Activated CD4-positive, alpha-beta memory T cell treated with anti-CD3 and anti-CD28 coated beads, Interleukin-2, amount 10 ng/mL, durations not matched to agents 7 days and 5 days (primary cell): ENCODE measurements at regions of chr4 and their contacts with region 1.

Region 1: GRCh38 chr4:40205259-40206198 is 8.7 kb downstream of the RHOH start:
- DNase-seq: peak; percentile 66
- H3K4me3 Mint-ChIP-seq: peak overlapping the region; percentile 97
- H3K27ac Mint-ChIP-seq: peak overlapping the region; percentile 99
- H3K4me1 Mint-ChIP-seq: peaks cover 64% of the 10 kb centered on the region
- H3K27me3 Mint-ChIP-seq: no peaks in the 10 kb centered on the region

Region 2: GRCh38 chr4:39771006-39771724 is 434.4 kb before region 1 on chr4:
- CTCF ChIA-PET with region 1: no interaction called
- POLR2A ChIA-PET with region 1: no interaction called
- DNase-seq: no peak
- H3K4me3 Mint-ChIP-seq: no peak overlapping the region
- H3K27ac Mint-ChIP-seq: no peak overlapping the region
- H3K4me1 Mint-ChIP-seq: peaks cover 1% of the 10 kb centered on the region
- H3K27me3 Mint-ChIP-seq: no peaks in the 10 kb centered on the region

Region 3: DNA sequence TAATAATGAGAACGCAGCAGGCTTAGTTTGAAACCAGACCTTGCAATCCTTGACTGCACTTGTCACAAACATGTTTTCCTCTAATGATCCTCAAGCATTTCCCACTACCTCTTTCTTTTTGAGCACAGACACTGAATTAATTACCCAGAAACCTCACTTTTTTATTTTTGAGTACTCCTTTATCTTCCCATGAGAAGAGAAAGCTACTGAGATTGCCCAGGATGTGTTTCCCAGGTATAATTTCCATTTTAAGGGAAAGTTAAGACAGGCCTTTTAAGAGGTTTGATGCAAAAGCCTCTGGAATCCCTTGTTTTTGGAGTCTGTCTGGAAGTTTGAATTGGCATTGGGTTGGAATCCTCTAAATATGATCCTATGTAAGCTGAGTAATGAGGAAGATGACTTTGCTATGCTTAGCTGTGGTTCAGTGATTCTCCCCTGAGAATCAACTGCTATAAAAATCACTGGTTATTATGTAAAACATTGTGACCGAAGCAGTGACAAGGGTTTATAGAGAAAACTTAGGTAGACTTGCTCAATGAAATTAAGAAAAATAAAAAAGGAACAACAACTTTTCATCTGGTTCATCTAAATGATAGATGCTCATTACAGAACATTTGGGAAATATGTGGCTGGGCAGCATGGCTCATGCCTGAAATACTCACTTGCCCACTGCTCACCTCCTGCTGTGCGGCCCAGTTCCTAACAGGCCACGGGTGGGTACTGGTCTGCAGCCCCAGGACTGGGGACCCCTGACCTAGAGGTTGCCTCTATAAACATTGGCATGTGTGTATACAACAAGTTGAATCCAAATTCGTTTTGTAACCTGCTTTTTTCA is 19.5 kb before region 1 on chr4:
- CTCF ChIA-PET with region 1: interaction called, 7 read pairs
- POLR2A ChIA-PET with region 1: interaction called, 135 read pairs
- DNase-seq: no peak
- H3K4me3 Mint-ChIP-seq: no peak overlapping the region
- H3K27ac Mint-ChIP-seq: no peak overlapping the region
- H3K4me1 Mint-ChIP-seq: peaks cover 57% of the 10 kb centered on the region
- H3K27me3 Mint-ChIP-seq: no peaks in the 10 kb centered on the region

Region 4: GRCh38 chr4:40193016-40193571 is 12.4 kb before region 1 on chr4:
- CTCF ChIA-PET with region 1: interaction called, 9 read pairs
- POLR2A ChIA-PET with region 1: interaction called, 333 read pairs
- DNase-seq: no peak
- H3K4me3 Mint-ChIP-seq: peak overlapping the region; percentile 97
- H3K27ac Mint-ChIP-seq: peak overlapping the region; percentile 99
- H3K4me1 Mint-ChIP-seq: peaks cover 67% of the 10 kb centered on the region
- H3K27me3 Mint-ChIP-seq: no peaks in the 10 kb centered on the region

Region 5: DNA sequence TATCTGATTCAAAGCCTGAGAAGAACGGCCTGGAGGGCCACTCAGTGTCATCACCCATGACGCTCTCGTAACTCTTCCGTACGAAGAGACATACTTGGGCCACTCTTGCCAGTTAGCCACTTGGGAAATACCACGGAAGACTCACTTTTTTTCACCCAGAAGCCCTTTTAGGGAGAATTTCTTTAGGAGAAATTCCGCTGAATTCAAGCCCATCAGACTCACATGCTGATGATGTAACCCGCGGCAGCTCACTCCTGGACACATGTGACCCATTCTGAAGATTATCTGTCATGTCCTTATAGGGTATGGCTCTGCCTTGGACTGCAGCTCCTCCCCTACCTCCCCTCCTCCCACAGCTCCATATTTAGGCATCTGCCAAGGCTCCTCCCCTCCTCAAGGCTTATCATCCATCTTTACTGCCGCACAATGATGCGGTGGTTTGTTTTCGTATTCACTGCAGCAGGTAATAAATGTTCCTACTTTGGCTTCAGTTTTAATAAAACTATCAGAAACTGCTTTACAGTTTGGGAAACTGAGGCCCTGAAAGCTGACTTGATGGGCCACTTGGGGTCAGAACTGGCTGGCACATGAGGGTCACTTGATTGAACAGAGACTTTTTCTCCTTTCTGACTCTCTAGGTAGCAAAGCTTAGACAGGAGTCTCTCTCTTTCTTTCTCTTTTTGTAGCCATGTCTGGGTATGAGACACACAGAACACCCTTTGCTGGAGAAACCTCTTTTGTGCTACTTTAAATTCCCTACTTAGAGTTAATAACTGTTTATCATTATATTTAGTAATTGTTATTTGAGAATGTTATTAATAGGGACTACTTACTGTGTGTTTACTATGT is 33.4 kb after region 1 on chr4:
- CTCF ChIA-PET with region 1: interaction called, 8 read pairs
- POLR2A ChIA-PET with region 1: interaction called, 112 read pairs
- DNase-seq: peak; percentile 87
- H3K4me3 Mint-ChIP-seq: peak overlapping the region; percentile 67
- H3K27ac Mint-ChIP-seq: peak overlapping the region; percentile 93
- H3K4me1 Mint-ChIP-seq: peaks cover 89% of the 10 kb centered on the region
- H3K27me3 Mint-ChIP-seq: no peaks in the 10 kb centered on the region